Activated T-helper 1 cell treated with anti-CD3 and anti-CD28 coated beads, Interleukin-12 subunit alpha, Interleukin-12 subunit beta, Interleukin-2, Interleukin-4 antibody, amounts not matched to agents 30 ng/mL and 10 ng/mL and 1 ng/mL, durations not matched to agents 14 hours and 24 hours and 36 hours (primary cell): ENCODE measurements at regions of chr2 and their contacts with region 1.

Region 1: DNA sequence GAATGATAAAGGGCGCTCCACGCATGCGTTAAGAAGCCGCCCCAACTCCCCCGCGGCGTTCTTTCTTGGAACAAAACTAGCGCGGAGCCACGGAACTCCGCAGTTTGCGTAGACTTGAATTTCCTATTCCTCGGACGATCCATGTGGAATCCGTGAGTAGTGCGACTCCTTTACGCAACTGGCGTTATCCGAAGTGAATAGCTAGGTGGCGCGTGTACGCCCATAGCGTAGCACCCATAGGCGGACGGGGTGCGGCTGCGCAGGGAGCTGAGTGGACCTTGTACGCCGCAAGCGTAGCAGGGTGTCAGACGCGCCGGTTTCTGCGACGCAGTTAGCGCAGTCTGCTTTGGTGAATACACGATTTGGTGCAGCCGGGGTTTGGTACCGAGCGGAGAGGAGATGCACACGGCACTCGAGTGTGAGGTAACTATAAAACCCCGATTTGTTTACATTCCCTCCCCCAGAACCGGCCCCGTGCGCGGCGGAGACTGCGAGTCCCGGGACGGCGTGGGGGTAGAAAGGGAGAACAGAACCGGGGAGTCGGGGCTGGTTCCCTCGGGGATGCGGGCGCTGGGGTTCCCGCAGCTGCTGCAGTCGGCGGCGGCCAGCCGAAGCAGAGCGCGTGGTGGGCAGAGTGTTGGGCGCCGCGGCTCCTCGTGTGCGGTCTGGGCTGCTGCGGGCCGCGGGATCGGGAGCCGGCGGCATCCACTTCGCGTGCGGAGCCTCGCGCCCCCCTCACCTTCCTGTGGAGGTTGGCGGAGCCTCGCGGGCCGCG is at the start of gene SLC39A10:
- DNase-seq: peak; percentile 97
- H3K4me3 Mint-ChIP-seq: peak within 1 kb of the TSS; percentile 99
- H3K27ac Mint-ChIP-seq: peak within 1 kb of the TSS; percentile 100
- H3K4me1 Mint-ChIP-seq: peaks cover 32% of the 10 kb centered on the region
- H3K27me3 Mint-ChIP-seq: no peaks in the 10 kb centered on the region
- total RNA-seq, gene SLC39A10: 32.4 and 32.5 TPM in 2 replicates

Region 2: DNA sequence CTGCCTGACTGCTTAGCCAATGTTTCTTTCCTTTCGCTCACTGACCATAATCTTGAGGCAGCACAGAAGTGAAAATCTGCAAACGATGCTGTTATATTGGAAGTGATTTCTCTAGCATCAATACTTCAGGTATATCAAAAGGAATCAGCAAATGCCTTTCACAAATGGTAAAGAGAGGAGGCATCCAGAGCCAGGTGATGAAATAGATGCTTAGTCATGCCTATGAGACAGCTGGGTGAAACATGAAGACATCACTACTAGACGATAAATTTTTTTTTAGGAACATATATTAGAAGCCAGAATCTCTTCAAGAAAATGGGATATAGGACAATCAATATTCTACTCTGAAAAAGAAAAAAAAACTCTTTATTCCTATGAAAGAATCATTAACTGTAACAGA is 249.3 kb before region 1 on chr2:
- intact Hi-C with region 1: loop called (anchors 5 kb)
- DNase-seq: no peak
- H3K4me3 Mint-ChIP-seq: no peak overlapping the region
- H3K27ac Mint-ChIP-seq: no peak overlapping the region
- H3K4me1 Mint-ChIP-seq: peaks cover 21% of the 10 kb centered on the region
- H3K27me3 Mint-ChIP-seq: no peaks in the 10 kb centered on the region

Region 3: DNA sequence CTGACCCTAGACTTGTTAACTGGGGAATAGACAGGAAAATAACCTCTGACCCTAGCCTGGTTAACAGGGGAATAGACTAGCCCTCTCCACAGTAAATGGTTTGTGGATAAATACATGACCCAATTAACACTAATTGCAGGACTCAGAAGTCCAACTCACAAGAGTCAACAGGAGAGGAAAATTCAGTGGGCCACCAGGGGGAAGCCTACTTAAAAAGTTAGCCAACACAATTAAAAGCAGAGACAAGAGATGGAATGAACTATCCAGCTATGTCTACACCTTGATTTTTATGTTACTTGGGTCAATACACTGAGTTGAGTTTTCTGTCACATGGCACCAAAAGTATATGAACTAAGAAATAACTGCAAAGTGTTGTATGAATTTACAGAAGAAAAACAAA is 158.9 kb before region 1 on chr2:
- intact Hi-C with region 1: loop called (anchors 1 kb)
- DNase-seq: peak; percentile 12
- H3K4me3 Mint-ChIP-seq: no peak overlapping the region
- H3K27ac Mint-ChIP-seq: no peak overlapping the region
- H3K4me1 Mint-ChIP-seq: peaks cover 42% of the 10 kb centered on the region
- H3K27me3 Mint-ChIP-seq: no peaks in the 10 kb centered on the region

Region 4: DNA sequence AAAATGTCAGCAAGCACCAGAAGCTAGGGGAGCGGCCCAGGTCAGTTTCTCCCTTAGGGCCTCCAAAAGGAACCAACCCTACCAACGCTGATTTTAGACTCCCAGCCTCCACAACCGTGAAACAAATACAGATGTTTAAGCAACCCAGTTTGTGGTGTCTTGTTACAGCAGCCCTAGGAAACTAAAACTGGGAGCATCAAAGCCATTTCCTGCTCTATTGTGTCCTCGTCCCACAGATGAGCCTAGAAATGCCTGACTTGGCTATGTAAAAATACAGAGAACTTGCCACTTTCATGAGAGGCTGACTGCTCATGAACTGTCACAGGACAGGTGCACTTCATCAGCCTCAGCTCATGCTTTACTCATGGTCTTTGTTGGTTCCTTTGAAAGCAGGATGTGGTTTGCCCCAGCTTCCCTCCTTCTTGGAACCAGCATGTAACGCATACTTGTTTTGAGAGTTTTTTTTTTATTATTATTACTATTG is 97.6 kb before region 1 on chr2:
- intact Hi-C with region 1: loop called (anchors 1 kb)
- DNase-seq: peak; percentile 81
- H3K4me3 Mint-ChIP-seq: peak overlapping the region; percentile 77
- H3K27ac Mint-ChIP-seq: peak overlapping the region; percentile 96
- H3K4me1 Mint-ChIP-seq: peaks cover 62% of the 10 kb centered on the region
- H3K27me3 Mint-ChIP-seq: no peaks in the 10 kb centered on the region

Region 5: GRCh38 chr2:195636890-195637289 is 20.2 kb before region 1 on chr2:
- intact Hi-C with region 1: no loop called
- DNase-seq: no peak
- H3K4me3 Mint-ChIP-seq: no peak overlapping the region
- H3K27ac Mint-ChIP-seq: no peak overlapping the region
- H3K4me1 Mint-ChIP-seq: no peaks in the 10 kb centered on the region
- H3K27me3 Mint-ChIP-seq: no peaks in the 10 kb centered on the region

Region 6: GRCh38 chr2:195672668-195673067 is 15.6 kb after region 1 on chr2:
- intact Hi-C with region 1: no loop called
- DNase-seq: no peak
- H3K4me3 Mint-ChIP-seq: no peak overlapping the region
- H3K27ac Mint-ChIP-seq: no peak overlapping the region
- H3K4me1 Mint-ChIP-seq: peaks cover 19% of the 10 kb centered on the region
- H3K27me3 Mint-ChIP-seq: no peaks in the 10 kb centered on the region

Region 7: DNA sequence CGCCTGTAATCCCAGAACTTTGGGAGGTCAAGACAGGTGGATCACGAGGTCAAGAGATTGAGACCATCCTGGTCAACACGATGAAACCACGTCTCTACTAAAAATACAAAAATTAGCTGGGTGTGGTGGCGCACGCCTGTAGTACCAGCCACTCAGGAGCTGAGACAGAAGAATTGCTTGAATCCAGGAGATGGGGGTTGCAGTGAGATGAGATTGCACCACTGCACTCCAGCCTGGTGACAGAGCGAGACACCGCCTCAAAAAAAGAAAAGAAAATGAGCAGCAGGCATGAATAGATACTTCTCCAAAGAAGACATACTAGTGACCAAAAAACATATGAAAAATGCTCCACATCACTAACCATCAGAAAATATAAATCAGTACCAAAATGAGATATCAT is 273.0 kb after region 1 on chr2:
- intact Hi-C with region 1: loop called (anchors 10 kb)
- DNase-seq: no peak
- H3K4me3 Mint-ChIP-seq: no peak overlapping the region
- H3K27ac Mint-ChIP-seq: no peak overlapping the region
- H3K4me1 Mint-ChIP-seq: no peaks in the 10 kb centered on the region
- H3K27me3 Mint-ChIP-seq: peaks cover 4% of the 10 kb centered on the region

Region 8: DNA sequence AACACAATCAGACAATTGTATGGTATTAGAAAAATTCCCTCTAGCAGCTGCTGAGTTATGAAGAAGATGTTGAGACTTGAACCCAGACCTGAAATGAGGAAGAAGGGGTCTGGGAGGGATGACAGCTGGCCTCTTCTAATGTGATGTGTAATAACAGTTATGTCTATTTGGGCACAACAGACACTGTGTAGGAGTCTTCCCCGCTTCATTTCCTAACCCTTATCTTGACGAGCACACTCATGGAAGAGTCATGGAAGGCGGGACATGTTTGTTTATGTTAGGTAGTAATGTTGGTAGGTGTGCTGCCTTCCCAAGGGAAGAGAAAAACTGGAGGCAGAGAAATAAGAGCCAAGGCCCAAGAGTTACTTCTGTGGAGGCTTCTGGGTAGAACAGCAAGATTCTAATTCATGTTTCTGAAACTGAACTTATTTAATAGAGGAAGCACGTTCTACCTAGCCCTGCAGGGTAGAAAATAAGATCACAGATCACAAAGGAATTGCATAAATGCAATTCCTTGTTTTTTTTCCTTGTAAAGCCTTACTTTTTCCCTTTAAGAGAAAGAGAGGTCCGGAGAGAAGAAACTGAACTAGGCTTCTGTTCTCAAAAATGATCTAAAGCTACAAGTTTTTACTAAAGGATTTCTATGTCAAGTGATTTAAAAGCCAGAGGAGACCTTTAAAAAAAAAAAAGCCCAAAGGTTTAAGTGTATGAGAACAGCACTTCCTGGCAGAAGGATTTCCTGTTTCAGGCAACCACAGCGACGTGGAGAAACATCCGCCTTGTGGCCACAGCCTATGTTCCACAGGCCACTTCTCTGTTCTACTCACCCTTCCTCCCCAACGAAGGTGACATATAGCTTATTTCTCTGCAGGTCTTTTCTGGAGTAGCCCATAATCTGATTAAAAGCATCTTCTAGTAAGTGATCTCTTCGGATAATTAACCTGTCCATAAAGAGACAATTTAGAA is 582.9 kb after region 1 on chr2:
- intact Hi-C with region 1: loop called (anchors 5 kb)
- DNase-seq: peak; percentile 83
- H3K4me3 Mint-ChIP-seq: peak overlapping the region; percentile 60
- H3K27ac Mint-ChIP-seq: peak overlapping the region; percentile 97
- H3K4me1 Mint-ChIP-seq: peaks cover 76% of the 10 kb centered on the region
- H3K27me3 Mint-ChIP-seq: no peaks in the 10 kb centered on the region

Region 9: DNA sequence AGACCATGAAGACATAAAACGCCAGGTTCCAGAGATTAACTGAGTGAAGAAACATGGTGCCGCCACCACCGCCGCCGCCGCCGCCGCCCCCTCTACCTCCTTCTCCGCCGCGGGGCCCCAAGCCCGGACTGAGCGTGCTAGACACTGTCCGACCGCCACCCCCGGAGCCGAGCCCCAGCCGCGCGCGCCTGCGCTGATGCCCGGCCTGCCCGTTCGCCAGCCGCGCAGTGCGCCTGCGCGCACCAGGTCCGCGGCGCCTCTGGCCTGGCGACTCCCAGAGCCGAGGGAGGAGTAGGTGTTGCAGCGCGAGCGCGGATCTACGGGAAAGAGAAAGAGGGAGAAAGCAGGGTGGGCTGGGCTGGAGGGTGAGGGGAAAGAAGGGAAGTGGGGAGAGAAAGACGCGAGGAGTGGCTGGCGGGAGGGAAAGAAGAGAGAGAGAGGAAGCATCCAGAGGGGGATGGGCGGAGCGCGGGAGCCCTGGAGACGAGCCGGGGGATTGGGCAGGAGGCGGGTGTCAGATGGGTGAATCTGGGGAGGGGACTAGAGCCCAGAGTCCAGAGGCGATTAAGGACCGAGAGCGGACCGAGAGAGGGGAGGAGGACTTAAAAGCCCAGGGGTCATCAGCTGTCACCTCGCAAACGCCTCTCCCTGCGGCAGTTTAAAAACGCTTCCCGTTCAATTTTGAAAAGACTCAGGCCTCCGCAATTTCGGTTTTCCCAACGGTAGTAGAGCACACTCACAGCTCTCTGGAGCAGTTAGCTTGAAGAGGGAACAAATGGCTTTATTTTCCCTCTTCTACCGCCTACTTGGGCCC is 1269.7 kb after region 1 on chr2 and contains the start of gene PGAP1:
- intact Hi-C with region 1: loop called (anchors 5 kb)
- DNase-seq: peak; percentile 87
- H3K4me3 Mint-ChIP-seq: peak within 1 kb of the TSS; percentile 95
- H3K27ac Mint-ChIP-seq: peak within 1 kb of the TSS; percentile 99
- H3K4me1 Mint-ChIP-seq: peaks cover 45% of the 10 kb centered on the region
- H3K27me3 Mint-ChIP-seq: peaks cover 1% of the 10 kb centered on the region
- total RNA-seq, gene PGAP1: 30.1 TPM in 2 replicates